ENCODE measurements at regions of chrX and their contacts with region 1.

Region 1: DNA sequence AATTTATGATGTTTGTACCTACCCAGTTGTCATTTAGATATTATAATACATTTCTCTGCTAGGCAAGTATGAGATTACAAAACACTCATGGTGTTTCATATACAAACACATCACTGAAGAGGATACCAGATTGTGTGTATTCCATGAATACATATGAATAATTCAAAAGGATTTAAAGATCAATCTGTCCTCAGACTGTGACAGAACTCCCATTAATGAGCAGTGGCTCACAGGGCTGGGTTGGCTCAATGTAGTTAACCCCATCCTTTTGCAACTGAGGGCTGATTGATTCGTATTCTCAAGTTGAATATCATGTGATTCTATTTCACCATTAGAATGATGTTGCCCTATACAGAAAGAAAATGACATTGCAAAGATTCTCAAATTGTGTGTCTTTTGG is 79.6 kb upstream of the SPANXN2 start:
- DNase-seq: no peak
- H3K4me3 ChIP-seq: no peak overlapping the region
- H3K27ac ChIP-seq: no peak overlapping the region
- H3K4me1 ChIP-seq: no peaks in the 10 kb centered on the region
- H3K27me3 ChIP-seq: no peaks in the 10 kb centered on the region
- CTCF ChIP-seq: no peak

Region 2: GRCh38 chrX:143754183-143754582 is 46.0 kb before region 1 on chrX:
- CTCF ChIA-PET with region 1: no interaction called
- POLR2A ChIA-PET with region 1: no interaction called
- intact Hi-C with region 1: loop called (anchors 10 kb)
- DNase-seq: no peak
- H3K4me3 ChIP-seq: no peak overlapping the region
- H3K27ac ChIP-seq: no peak overlapping the region
- H3K4me1 ChIP-seq: no peaks in the 10 kb centered on the region
- H3K27me3 ChIP-seq: no peaks in the 10 kb centered on the region
- CTCF ChIP-seq: no peak

Measured in PC-9 (cell line).